Cardiac septum (tissue), 1 donor: ENCODE measurements at regions of chr21 and their contacts with region 1.

Region 1: DNA sequence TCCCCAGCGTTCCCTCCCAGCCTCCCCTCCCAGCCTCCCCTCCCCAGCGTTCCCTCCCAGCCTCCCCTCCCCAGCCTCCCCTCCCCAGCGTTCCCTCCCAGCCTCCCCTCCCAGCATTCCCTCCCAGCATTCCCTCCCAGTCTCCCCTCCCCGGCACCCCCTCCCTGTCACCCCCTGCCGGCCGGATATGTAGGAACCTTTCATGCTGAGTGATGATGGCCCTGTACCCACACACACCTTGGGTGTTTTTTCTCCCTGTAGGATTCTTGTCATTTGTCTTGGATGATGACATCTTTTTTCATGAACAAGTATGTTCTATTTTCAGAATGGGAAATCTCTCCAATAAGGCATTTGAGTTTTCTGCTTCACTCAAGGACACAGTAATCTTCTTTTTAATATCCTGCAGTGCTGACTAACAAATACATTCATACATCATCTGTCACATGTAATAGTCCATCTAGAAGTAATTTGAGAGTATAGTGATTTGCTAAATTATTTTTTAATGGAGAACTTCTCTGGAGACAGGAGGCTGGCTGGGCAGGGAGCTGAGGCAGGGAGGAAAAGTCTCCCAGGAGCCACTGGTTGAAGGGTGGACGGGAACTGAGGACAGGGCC is 19.5 kb downstream of the FTCD start:
- DNase-seq: no peak

Region 2: DNA sequence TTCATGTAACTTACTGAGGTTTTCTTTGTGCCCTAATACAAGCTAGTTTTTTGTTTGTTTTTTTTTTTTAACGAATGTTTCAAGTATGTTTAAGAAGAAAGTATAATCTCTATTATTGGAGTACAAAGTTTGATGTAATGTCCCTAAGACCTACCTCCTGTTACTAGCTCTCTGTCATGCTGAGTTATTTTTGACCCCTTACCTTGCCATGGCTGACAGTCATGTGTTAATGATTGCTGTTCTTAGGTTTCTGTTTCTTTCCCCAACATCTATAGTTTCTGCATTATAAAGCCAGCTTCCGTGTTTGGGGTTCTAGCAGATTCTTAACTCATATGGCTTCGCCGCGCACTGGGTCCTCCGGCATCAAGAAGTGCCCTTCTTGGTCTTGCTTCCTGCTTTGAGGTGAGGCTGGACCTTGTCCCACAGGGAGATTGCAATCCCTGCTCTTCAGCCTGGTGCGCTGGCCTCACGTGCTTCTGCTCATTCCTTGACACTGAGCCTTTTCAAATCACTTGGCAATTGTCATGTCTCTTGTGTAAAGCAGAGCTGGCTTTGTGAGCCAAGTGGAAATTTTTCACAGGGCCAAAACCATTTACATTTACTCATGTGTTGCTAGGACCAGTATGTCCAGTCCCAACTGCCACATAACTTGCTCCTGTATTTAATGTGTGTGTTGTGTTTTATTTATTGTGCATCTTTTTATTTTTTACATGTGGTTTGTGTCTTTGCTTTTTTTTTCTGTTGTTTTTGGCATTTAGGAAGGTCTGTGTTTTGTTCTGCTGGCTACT is 289.3 kb before region 1 on chr21:
- intact Hi-C with region 1: no loop called
- DNase-seq: peak; percentile 75

Region 3: DNA sequence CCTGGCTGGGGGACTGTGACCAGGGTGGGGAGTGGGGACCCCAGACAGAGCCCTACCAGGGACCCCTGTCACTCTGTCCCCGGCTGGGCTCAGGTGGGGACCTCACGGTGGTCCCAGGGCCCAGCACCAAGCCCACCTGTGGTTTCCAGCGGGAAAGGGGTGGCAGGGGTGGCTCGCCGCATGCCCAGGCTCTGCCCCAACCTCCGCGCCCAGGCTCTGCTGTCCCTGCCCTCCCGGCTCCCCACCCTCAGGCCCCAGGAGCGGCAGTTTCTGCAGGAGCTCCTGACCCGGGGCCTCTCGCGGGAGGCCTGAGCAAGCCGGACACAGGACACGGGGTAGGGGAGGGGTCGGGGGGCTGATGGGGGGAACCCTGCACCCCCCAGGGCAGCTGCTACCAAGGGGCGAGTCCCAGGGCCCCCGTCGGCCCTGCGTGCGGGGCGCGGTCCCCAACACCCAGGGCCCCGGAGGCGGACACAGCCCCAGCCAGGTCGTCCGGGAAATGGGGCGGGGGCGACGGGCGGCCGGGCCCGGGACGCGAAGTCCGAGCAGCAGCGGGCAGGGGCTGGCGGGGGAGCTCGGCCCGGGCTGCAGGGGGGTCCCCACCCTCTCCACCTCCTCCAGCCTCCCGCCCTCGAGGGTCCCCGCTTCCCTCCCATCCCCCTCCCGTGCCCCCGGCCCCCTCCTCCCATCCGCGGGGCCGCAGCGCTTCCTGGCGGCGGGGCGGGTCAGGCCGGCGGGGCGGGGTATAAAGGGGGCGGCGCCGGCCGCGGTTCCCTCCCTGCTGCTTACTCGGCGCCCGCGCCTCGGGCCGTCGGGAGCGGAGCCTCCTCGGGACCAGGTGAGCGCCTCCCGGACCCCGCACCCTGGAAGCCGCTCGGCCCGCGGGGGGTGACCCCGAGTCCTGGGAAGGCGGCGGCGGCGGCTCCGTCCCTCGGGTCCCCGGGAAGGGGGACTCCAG is 38.3 kb before region 1 on chr21 and contains the start of gene COL6A2:
- intact Hi-C with region 1: loop called (anchors 1 kb)
- DNase-seq: peak; percentile 77
- total RNA-seq, gene COL6A2: 157 TPM

Region 4: DNA sequence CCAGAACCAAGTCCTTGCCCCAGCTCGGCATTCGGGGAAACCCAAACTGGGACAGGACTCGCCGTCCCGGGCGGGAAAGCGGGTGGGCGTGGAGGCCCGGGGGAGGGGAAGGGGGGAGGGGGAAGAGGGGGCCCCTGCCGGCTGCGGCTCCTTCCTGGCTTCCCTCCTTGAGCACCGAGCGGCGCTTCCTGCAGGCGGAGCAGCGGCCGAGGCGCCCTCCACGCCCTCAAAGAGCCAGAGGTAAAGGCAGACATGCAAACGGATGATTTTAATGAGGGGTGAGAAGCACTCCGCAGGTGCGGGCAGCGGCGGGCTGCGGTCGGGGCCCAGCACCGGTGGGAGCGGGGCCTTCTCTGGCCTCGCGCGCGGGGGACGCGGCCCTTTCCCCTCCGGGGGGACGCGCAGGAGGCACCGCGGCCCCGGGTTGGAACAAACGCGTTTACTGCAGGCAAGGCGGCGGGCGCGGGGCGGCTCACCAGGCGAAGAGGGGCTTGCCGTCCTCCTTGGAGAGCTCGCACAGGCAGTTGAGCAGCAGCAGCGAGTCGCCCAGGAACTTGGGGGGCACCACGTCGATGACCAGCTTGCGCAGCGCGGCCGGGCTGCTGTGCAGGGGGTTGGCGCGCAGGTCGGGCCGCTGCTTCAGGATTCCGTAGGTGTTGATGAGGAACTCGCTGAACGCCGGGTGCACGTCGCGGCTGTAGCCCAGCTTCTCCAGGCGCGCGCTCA is 25.2 kb after region 1 on chr21:
- intact Hi-C with region 1: no loop called
- DNase-seq: peak; percentile 49

Region 5: DNA sequence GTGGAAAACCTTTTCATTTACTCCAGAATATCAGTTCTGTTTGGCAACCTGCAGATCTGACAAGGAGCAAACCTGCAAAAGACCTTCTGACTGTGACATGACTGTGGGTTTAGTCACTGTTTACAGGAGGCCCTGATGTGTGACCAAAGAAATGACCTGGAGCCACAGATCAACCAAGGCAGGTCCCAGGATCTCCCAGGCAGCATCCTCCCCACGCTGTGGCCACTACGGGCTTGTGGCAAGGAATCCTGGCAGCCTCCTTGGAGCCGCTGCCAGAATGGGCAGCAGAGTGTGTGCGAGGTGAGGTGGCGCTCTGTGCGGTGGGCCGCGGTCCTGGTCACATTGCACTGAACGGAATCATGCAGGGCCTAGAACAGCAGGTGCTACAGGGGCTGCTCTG is 133.6 kb after region 1 on chr21:
- intact Hi-C with region 1: no loop called
- DNase-seq: peak; percentile 41